A549 (cell line): ENCODE measurements at regions of chr10 and their contacts with region 1.

Region 1: DNA sequence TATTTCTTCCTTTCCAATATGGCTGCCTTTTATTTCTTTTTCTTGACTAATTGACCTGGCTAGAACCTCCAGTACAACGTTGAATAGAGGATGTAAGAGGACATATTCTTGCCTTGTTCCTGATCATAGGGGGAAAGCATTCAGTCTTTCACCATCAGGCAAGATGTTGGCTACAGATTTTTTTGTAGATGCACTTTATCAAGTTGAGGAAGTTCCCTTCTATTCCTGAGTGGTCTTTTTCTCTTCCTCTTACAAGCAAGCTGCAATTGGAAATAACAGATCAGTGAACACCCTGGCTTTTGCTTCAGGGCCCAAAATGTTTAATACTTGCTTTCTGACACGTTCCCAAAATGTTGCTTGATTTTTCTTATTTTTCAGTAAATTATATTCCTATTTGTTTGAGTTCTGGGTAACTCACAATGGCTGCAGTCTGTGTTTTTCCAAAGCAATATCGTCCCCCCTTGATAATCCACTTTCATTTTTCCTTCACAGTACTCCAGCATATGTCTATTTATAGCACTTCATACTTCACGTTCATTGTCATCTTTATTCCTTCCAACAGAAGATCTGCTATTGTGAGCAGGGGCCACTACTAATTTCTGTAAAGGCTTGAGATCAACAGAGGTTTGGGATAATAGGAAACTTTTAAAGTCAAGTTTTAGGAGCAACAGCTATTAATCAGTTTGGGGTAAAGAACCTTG is 11.7 kb downstream of the CPEB3 start:
- DNase-seq: no peak
- ATAC-seq: no peak
- H3K4me3 ChIP-seq: no peak overlapping the region
- H3K27ac ChIP-seq: no peak overlapping the region
- H3K4me1 ChIP-seq: no peaks in the 10 kb centered on the region
- CTCF ChIP-seq: no peak
- EP300 ChIP-seq: no peak
- POLR2A ChIP-seq: no peak
- RAD21 ChIP-seq: no peak

Region 2: GRCh38 chr10:92103376-92104090 is 175.6 kb before region 1 on chr10:
- CTCF ChIA-PET with region 1: no interaction called
- POLR2A ChIA-PET with region 1: no interaction called
- DNase-seq: no peak
- ATAC-seq: peak; percentile 11 to 42; a peak in 3 of 6 replicates
- H3K4me3 ChIP-seq: no peak overlapping the region
- H3K27ac ChIP-seq: no peak overlapping the region
- H3K4me1 ChIP-seq: peaks cover 22% of the 10 kb centered on the region
- CTCF ChIP-seq: no peak
- EP300 ChIP-seq: no peak
- POLR2A ChIP-seq: no peak
- RAD21 ChIP-seq: no peak

Region 3: GRCh38 chr10:92248566-92248965 is 30.6 kb before region 1 on chr10:
- CTCF ChIA-PET with region 1: no interaction called
- POLR2A ChIA-PET with region 1: no interaction called
- DNase-seq: no peak
- ATAC-seq: no peak
- H3K4me3 ChIP-seq: no peak overlapping the region
- H3K27ac ChIP-seq: no peak overlapping the region
- H3K4me1 ChIP-seq: peaks cover 2% of the 10 kb centered on the region; the same call in 1 of the 3 replicates
- CTCF ChIP-seq: no peak
- EP300 ChIP-seq: no peak
- POLR2A ChIP-seq: no peak
- RAD21 ChIP-seq: no peak

Region 4: GRCh38 chr10:92290837-92291615 is 11.9 kb after region 1 on chr10 and contains the starts of genes CPEB3 and MARCHF5:
- CTCF ChIA-PET with region 1: interaction called, 10 read pairs
- POLR2A ChIA-PET with region 1: interaction called, 3 read pairs
- DNase-seq: peak; percentile 92 to 97
- ATAC-seq: peak; percentile 97 to 99
- H3K4me3 ChIP-seq: peak within 1 kb of the TSS; percentile 81
- H3K27ac ChIP-seq: peak within 1 kb of the TSS; percentile 91 to 95
- H3K4me1 ChIP-seq: peaks cover 9% of the 10 kb centered on the region; the same call in 2 of the 3 replicates
- CTCF ChIP-seq: no peak; the same call in 2 of the 3 replicates
- EP300 ChIP-seq: no peak
- POLR2A ChIP-seq: peak; percentile 55
- RAD21 ChIP-seq: peak in 1 of 2 experiments; percentile 24; a peak in 4 of 5 replicates
- polyA plus RNA-seq, gene CPEB3: 0.37 and 0.49 TPM in 2 replicates
- polyA plus RNA-seq, gene MARCHF5: 37.3 and 39.2 TPM in 2 replicates